Right ventricle myocardium inferior (tissue), 1 donor: ENCODE measurements at regions of chr6 and their contacts with region 1.

Region 1: GRCh38 chr6:63598049-63599036 is 26.1 kb downstream of the LOC128125822 start:
- DNase-seq: peak; percentile 76
- ATAC-seq: peak; percentile 91

Region 2: DNA sequence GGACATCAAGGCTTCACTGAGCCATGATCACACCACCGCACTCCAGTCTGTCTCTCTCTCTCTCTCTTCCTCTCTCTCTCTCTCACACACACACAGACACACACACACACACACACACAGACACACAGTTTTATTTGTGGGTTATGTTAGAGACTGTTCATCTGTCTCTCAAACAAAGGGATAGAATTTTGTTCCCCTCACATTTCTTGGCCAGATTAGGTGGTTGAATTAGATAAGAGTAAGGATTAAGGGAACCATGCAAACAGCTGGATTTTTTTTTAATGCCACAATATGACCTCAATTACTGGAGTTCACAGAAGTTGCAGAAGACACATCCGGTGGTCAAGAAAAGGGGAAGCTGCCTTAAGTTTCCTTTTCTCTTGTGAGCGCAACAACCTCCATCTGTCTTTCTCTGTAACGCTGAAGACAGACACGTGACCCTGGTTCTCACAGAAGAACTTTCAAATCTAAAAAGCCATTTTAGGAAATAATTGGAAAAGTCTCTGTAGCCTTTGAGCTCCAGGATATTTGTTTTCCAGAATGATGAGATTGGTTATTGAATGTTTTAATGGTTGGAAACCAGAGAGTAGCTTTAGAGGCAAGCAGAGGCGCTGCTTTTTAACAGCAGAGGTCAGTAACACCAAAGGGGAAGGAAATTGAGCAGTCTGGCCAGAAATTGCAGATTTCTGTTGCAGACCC is 245.6 kb before region 1 on chr6:
- intact Hi-C with region 1: loop called (anchors 5 kb)
- DNase-seq: no peak
- ATAC-seq: peak; percentile 73

Region 3: DNA sequence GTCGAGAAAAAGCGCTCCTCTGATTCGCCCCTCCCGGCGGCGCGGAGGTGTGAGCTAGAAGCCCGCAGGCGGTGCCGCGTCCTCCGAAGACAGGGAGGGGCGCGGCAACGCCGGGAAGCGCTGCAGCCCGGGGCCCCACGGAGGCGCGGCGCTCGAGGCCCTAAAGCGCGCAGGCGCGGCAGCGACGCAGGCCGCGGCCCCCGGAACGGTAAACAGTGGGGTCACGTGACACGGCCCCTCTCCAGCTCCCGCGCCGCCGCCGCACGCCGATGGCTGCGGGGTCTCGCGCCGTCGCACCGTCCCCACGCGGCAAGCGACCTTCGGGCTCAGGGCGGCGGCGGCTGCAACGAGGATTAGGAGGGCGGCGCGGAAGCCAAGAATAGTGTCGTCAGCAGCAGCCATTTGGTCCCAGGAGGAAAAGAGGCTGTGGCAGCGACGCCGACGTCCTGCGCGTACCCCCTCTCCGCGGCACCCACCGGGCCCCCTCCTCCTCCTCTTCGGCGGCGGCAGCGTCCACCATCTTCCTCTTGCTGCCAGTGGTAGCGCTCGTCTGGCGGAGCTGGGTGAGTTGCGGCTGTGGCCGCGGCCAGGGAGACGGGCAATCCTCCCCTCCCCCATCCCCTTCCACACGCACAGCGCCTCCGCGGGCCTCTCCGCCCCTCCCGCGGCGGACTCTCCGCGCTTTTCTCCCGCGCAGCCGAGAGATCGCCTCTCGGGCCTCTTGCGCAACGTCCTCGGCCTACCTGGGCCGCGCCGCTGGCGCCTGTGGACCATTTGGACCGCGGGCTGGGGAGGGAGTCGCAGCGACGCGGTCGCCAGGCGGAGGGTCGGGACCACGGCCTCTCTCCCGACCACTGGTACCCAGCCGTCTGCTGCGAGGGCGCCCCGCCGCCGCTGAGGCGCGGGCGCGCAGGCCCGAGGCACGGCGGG is 37.5 kb after region 1 on chr6 and contains the start of gene PHF3:
- intact Hi-C with region 1: loop called (anchors 2 kb)
- DNase-seq: peak; percentile 95
- ATAC-seq: peak; percentile 98
- total RNA-seq, gene PHF3: 33.4 TPM

Region 4: DNA sequence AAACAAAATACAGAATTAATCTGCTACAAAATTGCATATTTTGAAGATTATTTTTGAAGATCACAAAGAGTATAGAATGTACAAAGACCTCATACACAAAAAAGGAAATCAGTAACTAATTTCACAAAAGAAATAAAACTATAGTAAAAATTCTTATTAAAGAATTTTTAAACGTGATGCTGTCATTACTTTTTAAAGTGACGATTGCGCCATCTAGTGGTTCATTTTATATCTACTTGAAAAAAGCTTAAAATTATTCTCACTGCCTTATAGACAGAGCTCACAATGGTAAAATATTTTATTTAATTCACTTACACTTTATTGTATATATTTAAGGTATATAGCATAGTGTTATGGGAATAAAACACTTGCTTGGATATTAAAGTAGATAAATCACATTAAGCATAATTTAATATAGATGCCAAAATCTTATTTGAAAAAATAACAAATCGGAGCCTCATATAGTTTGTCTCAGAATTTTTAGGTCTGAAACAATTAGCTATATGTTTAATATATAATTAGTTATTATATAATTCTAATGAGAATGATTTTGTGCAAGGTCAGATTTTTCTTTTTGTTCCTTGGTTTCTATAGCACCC is 166.1 kb after region 1 on chr6:
- intact Hi-C with region 1: loop called (anchors 1 kb)
- DNase-seq: no peak
- ATAC-seq: no peak

Region 5: GRCh38 chr6:63910863-63911551 is 312.7 kb after region 1 on chr6:
- intact Hi-C with region 1: no loop called
- DNase-seq: no peak
- ATAC-seq: peak; percentile 44

Region 6: GRCh38 chr6:65004283-65004682 is 1405.9 kb after region 1 on chr6:
- intact Hi-C with region 1: no loop called
- DNase-seq: no peak
- ATAC-seq: no peak